IMR-90 (cell line): ENCODE measurements at regions of chr4 and their contacts with region 1.

Region 1: GRCh38 chr4:52376132-52376704 is 282.9 kb downstream of the USP46 start:
- DNase-seq: peak; percentile 47
- ATAC-seq: peak; percentile 48
- H3K4me3 ChIP-seq: no peak overlapping the region
- H3K27ac ChIP-seq: no peak overlapping the region
- H3K4me1 ChIP-seq: no peaks in the 10 kb centered on the region
- H3K27me3 ChIP-seq: peaks cover 9% of the 10 kb centered on the region
- CTCF ChIP-seq: peak; percentile 66
- POLR2A ChIP-seq: no peak
- RAD21 ChIP-seq: peak; percentile 69

Region 2: DNA sequence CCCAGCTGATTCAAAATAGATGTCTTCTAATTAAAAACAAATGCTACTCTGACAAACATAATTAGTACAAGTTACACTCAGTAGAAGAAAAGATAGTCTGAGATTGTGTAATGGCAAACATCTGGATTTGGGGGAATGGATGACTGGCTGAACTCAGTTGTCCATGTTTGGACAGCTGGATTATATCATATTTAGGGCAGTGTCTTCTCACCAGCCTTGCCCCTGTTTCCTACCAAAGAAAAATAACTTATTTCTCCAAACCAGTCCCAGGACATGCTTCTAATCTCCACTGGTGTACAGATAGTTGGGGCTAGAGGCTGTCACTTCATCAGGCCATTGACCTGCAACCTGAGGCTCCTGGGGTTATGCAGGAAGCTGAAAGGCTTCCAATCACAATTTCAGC is 45.6 kb after region 1 on chr4:
- CTCF ChIA-PET with region 1: no interaction called
- POLR2A ChIA-PET with region 1: no interaction called
- dilution Hi-C with region 1: no loop called
- in situ Hi-C with region 1: no loop called
- intact Hi-C with region 1: no loop called
- DNase-seq: no peak
- ATAC-seq: no peak
- H3K4me3 ChIP-seq: no peak overlapping the region
- H3K27ac ChIP-seq: no peak overlapping the region
- H3K4me1 ChIP-seq: no peaks in the 10 kb centered on the region
- H3K27me3 ChIP-seq: no peaks in the 10 kb centered on the region
- CTCF ChIP-seq: no peak
- POLR2A ChIP-seq: no peak
- RAD21 ChIP-seq: no peak

Region 3: GRCh38 chr4:52659001-52659721 is 282.9 kb after region 1 on chr4 and contains the start of gene USP46:
- CTCF ChIA-PET with region 1: no interaction called
- POLR2A ChIA-PET with region 1: interaction called, 5 read pairs
- dilution Hi-C with region 1: no loop called
- in situ Hi-C with region 1: loop called (anchors 10 kb)
- intact Hi-C with region 1: loop called (anchors 1 kb)
- DNase-seq: peak; percentile 69
- ATAC-seq: peak; percentile 92
- H3K4me3 ChIP-seq: peak within 1 kb of the TSS; percentile 99
- H3K27ac ChIP-seq: peak within 1 kb of the TSS; percentile 99
- H3K4me1 ChIP-seq: peaks cover 4% of the 10 kb centered on the region
- H3K27me3 ChIP-seq: no peaks in the 10 kb centered on the region
- CTCF ChIP-seq: no peak
- POLR2A ChIP-seq: no peak
- RAD21 ChIP-seq: no peak
- total RNA-seq, gene USP46: 15.4 and 20.3 TPM in 2 replicates

Region 4: DNA sequence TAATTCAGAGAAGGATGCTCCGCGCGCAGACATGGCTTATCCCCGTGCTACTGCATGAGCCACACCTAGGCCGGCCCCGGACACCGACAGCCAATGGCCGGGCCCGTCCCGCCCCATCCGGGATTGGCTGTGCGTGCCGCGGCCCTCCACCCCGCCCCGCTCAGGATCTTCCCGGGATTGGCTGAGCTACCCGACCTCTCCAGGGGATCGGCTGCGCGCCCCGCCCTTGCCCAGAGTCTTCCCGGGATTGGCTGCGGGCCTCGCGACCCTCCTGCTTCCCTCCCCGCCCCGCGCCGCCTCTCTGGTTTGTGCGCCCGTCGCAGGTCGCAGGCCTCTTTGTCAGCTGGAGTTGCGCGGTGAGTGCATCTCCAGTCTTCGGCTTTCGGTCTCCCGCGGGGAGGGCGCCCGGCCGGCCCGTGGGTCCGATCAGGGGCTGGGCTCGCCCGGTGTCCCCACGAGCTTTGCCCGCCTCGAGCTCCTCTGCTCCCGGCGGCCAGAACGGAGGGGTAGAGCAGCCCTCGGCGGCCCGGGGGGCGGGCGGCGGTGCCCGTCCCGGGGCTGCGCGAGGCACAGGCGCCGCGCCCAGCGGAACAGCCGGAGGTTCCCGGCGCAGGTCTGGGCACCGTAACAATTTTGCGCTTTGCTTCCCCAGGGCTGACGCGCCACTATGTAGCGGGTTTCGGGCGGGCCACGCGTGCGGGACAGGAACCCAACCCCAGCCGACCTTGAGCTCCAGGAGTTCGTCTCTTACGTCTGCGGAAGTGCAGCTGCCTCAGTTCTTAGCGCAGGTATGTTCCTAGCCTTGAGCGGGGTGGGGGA is 336.2 kb after region 1 on chr4:
- CTCF ChIA-PET with region 1: no interaction called
- POLR2A ChIA-PET with region 1: no interaction called
- dilution Hi-C with region 1: no loop called
- in situ Hi-C with region 1: no loop called
- intact Hi-C with region 1: loop called (anchors 10 kb)
- DNase-seq: peak; percentile 93
- ATAC-seq: peak; percentile 99
- H3K4me3 ChIP-seq: peak overlapping the region; percentile 68
- H3K27ac ChIP-seq: peak overlapping the region; percentile 74
- H3K4me1 ChIP-seq: no peaks in the 10 kb centered on the region
- H3K27me3 ChIP-seq: no peaks in the 10 kb centered on the region; the same call in 1 of the 2 replicates
- CTCF ChIP-seq: no peak
- POLR2A ChIP-seq: peak; percentile 89
- RAD21 ChIP-seq: no peak

Region 5: DNA sequence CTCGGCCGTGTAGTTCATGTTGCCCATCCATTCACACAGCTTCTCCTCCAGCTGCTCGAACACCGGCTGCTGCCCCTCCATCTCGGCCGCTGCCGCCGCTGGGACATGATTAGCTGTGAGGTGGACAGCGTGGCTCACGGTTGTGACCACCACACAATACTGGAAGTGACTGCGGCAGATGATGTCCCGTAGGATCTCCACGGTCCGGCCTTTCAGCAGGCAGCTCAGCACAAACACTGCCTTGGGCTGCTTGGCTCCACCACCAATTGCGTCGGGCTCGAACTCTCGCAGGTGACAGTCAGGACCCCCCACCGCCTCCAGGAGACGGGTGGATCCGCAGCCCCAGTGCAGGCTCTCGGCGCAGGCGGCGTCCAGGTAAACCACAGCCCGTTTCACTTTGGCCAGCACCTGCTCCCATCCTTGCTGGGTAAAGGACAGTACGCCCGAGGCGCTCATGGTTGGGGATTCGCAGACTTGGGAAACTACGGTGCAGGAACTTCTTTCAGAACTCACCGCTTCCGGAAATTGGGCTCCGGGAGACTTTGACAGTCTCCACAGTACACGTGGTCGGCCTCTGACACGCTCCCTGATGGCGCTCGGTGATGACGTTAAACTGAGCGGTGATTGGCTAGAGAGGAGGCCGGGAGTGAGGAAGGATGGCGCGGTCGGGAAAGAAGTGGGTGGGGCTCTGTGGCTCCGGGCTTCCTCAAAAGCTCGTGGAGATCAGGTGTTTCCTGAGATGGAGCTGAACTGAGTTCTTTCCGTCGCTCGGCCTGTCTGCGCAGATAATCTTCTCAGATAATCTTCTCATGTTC is 989.5 kb after region 1 on chr4 and contains the start of gene SCFD2:
- CTCF ChIA-PET with region 1: no interaction called
- POLR2A ChIA-PET with region 1: no interaction called
- dilution Hi-C with region 1: no loop called
- in situ Hi-C with region 1: loop called (anchors 10 kb)
- intact Hi-C with region 1: loop called (anchors 5 kb)
- DNase-seq: peak; percentile 97
- ATAC-seq: peak; percentile 97
- H3K4me3 ChIP-seq: peak within 1 kb of the TSS; percentile 79
- H3K27ac ChIP-seq: peak within 1 kb of the TSS; percentile 57
- H3K4me1 ChIP-seq: 0 out of 2 replicates have a peak, but pooled peaks cover 3% of the 10 kb centered on the region
- H3K27me3 ChIP-seq: no peaks in the 10 kb centered on the region
- CTCF ChIP-seq: no peak
- POLR2A ChIP-seq: peak; percentile 36; the same call in 1 of the 2 replicates
- RAD21 ChIP-seq: no peak
- total RNA-seq, gene SCFD2: 51.9 and 62.4 TPM in 2 replicates